Natural killer cell (primary cell): ENCODE measurements at regions of chr6 and their contacts with region 1.

Region 1: GRCh38 chr6:21593412-21593926 is at the start of gene SOX4:
- DNase-seq: peak; percentile 62 to 84
- ATAC-seq: peak; percentile 67 to 78 (median 74)
- H3K4me3 ChIP-seq: peak within 1 kb of the TSS; percentile 47
- H3K4me3 Mint-ChIP-seq: peak within 1 kb of the TSS; percentile 91
- H3K27ac ChIP-seq: peak within 1 kb of the TSS; percentile 12
- H3K27ac Mint-ChIP-seq: no peak within 1 kb of the TSS
- H3K4me1 ChIP-seq: peaks cover 30% of the 10 kb centered on the region
- H3K4me1 Mint-ChIP-seq: peaks cover 24 to 28% of the 10 kb centered on the region in 2 donors
- H3K27me3 ChIP-seq: peaks cover 6% of the 10 kb centered on the region
- H3K27me3 Mint-ChIP-seq: peaks cover 2 to 8% of the 10 kb centered on the region in 2 donors
- CTCF ChIP-seq: no peak
- total RNA-seq, gene SOX4: 4.4 to 7.6 (median 6.4) TPM

Region 2: GRCh38 chr6:20291764-20292580 is 1301.5 kb before region 1 on chr6:
- intact Hi-C with region 1: loop called (anchors 10 kb)
- DNase-seq: peak; percentile 59 to 89
- ATAC-seq: peak; percentile 82 to 98 (median 97)
- H3K4me3 ChIP-seq: no peak overlapping the region
- H3K4me3 Mint-ChIP-seq: no peak overlapping the region
- H3K27ac ChIP-seq: no peak overlapping the region
- H3K27ac Mint-ChIP-seq: no peak overlapping the region
- H3K4me1 ChIP-seq: no peaks in the 10 kb centered on the region
- H3K4me1 Mint-ChIP-seq: peaks cover 0 to 6% of the 10 kb centered on the region in 2 donors
- H3K27me3 ChIP-seq: no peaks in the 10 kb centered on the region
- H3K27me3 Mint-ChIP-seq: peaks cover 0 to under 1% of the 10 kb centered on the region in 2 donors
- CTCF ChIP-seq: peak; percentile 97

Region 3: DNA sequence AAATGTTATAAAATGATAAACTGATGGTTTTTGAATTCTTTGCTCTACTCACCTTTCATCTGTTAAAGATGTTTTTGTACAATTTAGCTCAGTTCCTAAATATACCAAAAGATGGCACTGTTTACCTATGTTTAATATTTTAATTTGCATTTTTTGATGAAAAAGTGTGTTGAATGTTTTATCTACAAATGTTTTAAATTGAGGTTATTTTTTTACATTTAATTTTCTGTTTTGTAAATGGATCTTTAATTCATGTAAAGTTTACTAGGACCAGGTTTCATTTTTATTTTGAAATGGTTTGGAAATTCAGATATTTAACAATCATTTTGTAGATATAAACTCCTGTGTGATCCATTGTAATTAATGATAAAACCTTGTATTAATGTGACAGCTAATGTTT is 1029.2 kb before region 1 on chr6:
- intact Hi-C with region 1: loop called (anchors 1 kb)
- DNase-seq: peak in 1 of 2 donors; percentile 53
- ATAC-seq: peak in 1 of 3 donors; percentile 41
- H3K4me3 ChIP-seq: no peak overlapping the region
- H3K4me3 Mint-ChIP-seq: no peak overlapping the region
- H3K27ac ChIP-seq: no peak overlapping the region
- H3K27ac Mint-ChIP-seq: no peak overlapping the region
- H3K4me1 ChIP-seq: no peaks in the 10 kb centered on the region
- H3K4me1 Mint-ChIP-seq: peaks cover 16% of the 10 kb centered on the region in 2 donors
- H3K27me3 ChIP-seq: no peaks in the 10 kb centered on the region
- H3K27me3 Mint-ChIP-seq: no peaks in the 10 kb centered on the region
- CTCF ChIP-seq: peak; percentile 81

Region 4: DNA sequence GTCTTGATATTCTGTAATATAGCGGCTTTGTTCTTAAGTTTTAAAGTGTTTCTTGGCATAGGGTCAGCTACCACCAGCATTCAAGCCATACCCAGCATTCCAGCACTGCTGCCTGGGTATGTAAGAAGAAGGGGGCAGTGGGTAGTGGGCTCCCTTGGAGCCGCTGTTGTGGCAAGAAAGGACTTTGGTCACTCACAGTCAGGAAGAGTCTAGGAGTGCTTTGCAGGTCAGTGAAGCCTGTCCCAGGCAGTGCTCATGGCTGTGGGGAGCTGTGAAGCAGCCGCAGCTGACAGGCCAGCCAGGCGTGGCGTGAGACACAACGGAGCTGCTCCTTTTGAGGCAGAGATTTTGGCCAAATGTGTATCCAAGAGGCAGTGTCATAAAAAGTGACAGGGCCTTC is 547.2 kb before region 1 on chr6:
- intact Hi-C with region 1: no loop called
- DNase-seq: no peak
- ATAC-seq: no peak
- H3K4me3 ChIP-seq: no peak overlapping the region
- H3K4me3 Mint-ChIP-seq: no peak overlapping the region
- H3K27ac ChIP-seq: no peak overlapping the region
- H3K27ac Mint-ChIP-seq: no peak overlapping the region
- H3K4me1 ChIP-seq: no peaks in the 10 kb centered on the region
- H3K4me1 Mint-ChIP-seq: no peaks in the 10 kb centered on the region
- H3K27me3 ChIP-seq: no peaks in the 10 kb centered on the region
- H3K27me3 Mint-ChIP-seq: no peaks in the 10 kb centered on the region
- CTCF ChIP-seq: no peak

Region 5: GRCh38 chr6:21922086-21922485 is 328.6 kb after region 1 on chr6:
- intact Hi-C with region 1: loop called (anchors 10 kb)
- DNase-seq: no peak
- ATAC-seq: no peak
- H3K4me3 ChIP-seq: no peak overlapping the region
- H3K4me3 Mint-ChIP-seq: no peak overlapping the region
- H3K27ac ChIP-seq: no peak overlapping the region
- H3K27ac Mint-ChIP-seq: no peak overlapping the region
- H3K4me1 ChIP-seq: peaks cover 4% of the 10 kb centered on the region
- H3K4me1 Mint-ChIP-seq: peaks cover 18 to 28% of the 10 kb centered on the region in 2 donors
- H3K27me3 ChIP-seq: no peaks in the 10 kb centered on the region
- H3K27me3 Mint-ChIP-seq: no peaks in the 10 kb centered on the region
- CTCF ChIP-seq: no peak